GM23248 (cell line): ENCODE measurements at regions of chr21 and their contacts with region 1.

Region 1: DNA sequence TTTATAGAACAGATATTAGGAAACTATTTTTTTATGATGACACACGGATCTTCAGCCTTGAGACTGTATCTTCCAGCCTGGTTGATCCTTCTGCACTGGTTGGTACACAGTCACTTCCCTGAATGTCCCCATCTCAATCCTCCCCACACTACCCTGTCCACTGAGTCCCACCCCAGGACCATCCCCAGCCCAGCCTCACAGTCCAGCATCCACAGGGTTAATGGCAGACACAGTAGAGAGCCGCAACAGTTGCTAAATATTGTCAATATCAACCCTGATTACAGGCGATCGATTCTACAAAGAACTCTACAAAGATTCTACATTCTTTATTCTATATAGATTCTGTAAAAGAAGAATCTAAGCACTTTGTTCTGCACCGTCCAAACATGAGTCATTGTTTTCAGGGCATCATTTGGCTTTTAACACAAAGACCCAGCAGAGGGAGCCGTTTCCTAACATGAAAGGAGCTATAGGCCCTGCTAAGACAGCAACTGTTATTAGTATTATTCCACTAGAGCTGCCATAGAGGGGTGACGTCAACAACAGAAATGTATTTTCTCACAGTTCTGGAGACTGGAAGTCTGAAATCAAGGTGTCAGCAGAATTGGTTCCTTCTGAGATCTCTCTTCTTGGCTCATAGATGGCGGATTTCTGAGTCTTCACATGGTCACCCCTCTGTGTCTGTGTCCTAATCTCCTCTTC is 30.1 kb upstream of the IFNAR2 start:
- DNase-seq: peak; percentile 97
- H3K4me3 ChIP-seq: no peak overlapping the region
- H3K27ac ChIP-seq: no peak overlapping the region
- H3K4me1 ChIP-seq: peaks cover 14% of the 10 kb centered on the region
- H3K27me3 ChIP-seq: no peaks in the 10 kb centered on the region

Region 2: GRCh38 chr21:32994305-32994704 is 205.4 kb before region 1 on chr21:
- in situ Hi-C with region 1: loop called (anchors 10 kb)
- DNase-seq: peak; percentile 54
- H3K4me3 ChIP-seq: no peak overlapping the region
- H3K27ac ChIP-seq: no peak overlapping the region
- H3K4me1 ChIP-seq: no peaks in the 10 kb centered on the region
- H3K27me3 ChIP-seq: peaks cover 59% of the 10 kb centered on the region

Region 3: DNA sequence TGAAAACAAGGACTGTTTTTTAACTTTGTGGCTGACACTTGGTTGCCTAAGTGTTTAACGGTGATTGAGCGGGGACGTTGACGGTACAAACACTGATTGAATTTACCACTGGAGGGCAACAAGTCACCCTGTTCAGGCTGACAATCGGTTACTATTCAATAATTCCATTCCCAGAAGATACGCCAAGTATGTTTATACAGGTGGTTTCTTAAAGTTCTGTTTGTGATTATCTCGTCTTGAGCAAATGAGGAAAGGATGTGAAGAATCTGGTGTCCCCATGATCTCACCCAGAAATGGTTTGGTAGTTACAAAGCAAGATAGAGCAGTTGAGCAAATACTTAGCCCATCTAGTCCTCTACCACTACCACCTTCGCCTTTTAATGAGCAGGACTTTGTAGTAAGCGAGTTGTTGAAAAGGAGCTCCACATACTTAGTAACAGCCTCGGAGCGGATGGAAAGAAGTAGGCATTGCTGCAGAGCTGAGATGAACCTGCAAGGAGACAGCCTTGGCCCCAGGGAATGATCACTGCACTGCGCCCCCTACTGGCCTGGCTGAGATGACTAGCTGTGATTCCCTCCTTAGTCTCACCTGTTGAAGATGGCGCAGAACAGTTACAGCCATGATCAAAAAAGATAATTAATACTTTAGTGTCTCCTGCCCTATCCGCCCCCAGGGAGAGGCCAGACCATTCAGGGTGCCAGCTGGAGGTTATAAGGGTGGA is 161.4 kb after region 1 on chr21:
- in situ Hi-C with region 1: loop called (anchors 10 kb)
- DNase-seq: peak; percentile 76
- H3K4me3 ChIP-seq: peak overlapping the region; percentile 35
- H3K27ac ChIP-seq: peak overlapping the region; percentile 62
- H3K4me1 ChIP-seq: peaks cover 26% of the 10 kb centered on the region
- H3K27me3 ChIP-seq: no peaks in the 10 kb centered on the region